ENCODE measurements at regions of chr20 and their contacts with region 1.

Region 1: GRCh38 chr20:45771182-45771759 is 20.4 kb downstream of the WFDC3 start:
- DNase-seq: peak; percentile 76
- ATAC-seq: peak; percentile 73 to 82

Region 2: GRCh38 chr20:45322952-45323383 is 448.3 kb before region 1 on chr20:
- intact Hi-C with region 1: loop called (anchors 2 to 5 kb)
- DNase-seq: peak; percentile 61
- ATAC-seq: peak; percentile 77 to 81

Region 3: DNA sequence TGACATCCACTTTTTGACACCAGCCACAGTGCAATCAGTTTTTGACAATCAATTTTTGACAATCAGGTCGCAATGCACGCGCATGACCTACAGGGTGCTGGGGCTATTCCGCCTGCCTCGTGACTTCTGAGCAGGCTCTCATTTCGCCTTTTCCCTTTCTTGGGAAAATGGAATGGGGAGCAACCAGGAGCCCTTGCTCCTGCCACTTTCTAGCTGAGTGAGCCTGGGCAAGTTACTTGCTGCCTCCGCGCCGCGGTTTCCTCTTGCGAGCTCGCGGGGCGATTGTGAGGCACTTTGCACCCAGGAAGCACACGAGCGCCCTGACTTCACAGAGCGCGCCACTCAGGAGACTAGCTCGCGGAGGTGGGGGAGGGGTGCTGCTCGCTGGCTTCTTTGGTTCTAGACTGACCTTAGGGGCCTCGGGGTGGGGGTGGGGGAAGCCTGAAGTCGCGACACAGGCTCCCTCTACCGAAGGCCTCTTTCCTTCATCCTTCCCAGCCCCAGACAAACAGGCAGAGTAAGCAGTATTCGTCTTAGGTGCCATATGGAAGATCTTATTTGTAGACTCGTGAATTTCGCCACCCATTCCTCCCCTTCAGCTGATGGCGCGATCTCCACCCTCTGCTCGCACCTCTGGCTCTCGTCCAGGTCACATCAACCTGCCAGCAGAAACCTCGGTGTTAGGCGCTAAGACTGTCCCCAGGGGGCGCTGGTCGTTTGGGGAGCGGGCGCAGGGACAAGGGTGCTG is 397.7 kb before region 1 on chr20:
- intact Hi-C with region 1: loop called in 1 of 2 experiments (anchors 5 kb)
- DNase-seq: peak; percentile 91
- ATAC-seq: peak; percentile 87 to 88

Region 4: GRCh38 chr20:45450097-45450818 is 321.0 kb before region 1 on chr20:
- intact Hi-C with region 1: loop called in 1 of 2 experiments (anchors 10 kb)
- DNase-seq: no peak
- ATAC-seq: peak in 1 of 2 donors; percentile 36

Region 5: DNA sequence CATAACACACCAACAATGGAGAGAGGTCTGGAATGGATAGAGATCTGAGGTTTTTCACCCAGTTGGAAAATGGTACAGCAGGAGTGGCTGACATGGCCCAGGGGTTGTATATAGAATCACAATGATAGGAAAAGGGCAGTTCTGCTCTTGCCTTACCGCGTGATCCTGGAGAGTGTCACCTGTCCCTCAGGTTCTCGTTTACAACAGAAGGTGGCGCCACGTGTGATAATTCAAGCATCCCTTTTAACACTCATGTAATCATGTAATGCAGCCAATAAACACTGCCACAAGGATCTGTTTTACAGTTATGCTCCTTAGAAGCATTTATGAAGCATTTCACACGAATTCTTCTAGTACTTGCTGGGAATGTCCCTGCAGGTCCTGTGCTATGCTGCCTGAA is 314.6 kb before region 1 on chr20:
- intact Hi-C with region 1: loop called (anchors 2 to 10 kb)
- DNase-seq: no peak
- ATAC-seq: no peak

Region 6: DNA sequence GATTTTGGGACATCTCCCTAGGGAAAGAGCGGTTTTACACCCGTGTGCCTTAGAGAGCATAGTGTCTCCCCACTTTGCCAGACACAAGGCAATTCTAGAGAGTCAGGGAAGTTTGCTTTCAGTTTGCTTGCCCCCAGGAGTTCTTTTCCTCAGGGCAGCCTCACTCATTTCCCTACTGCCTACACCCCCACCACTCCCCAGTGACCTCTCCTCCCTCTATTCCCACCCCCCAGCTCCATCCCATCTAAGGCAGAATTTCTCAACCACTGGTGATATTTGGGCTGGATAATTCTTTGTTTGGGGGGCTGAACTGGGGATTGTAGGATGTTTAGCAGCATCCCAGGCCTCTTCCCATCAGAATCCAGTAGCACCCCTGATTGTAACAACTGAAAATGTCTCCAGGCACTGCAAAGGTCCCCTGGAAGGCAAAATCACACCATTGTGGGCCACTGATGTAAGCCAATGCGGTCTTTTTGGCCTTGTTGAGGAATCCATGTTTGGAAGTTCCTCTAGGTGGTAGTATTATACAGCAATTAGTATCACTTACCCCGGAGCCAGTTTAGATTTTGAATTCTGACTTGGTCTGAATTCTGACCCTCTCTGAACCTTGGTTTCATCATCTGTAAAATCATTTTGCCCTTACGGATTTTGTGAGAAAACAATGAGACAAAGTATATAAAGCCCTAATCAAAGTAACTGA is 225.4 kb before region 1 on chr20:
- intact Hi-C with region 1: loop called in 1 of 2 experiments (anchors 5 kb)
- DNase-seq: no peak
- ATAC-seq: peak in 1 of 2 donors; percentile 63

Region 7: GRCh38 chr20:45735552-45735951 is 35.7 kb before region 1 on chr20:
- intact Hi-C with region 1: no loop called
- DNase-seq: no peak
- ATAC-seq: no peak

Region 8: GRCh38 chr20:45880988-45881788 is 109.9 kb after region 1 on chr20 and contains the start of gene ZSWIM1:
- intact Hi-C with region 1: no loop called
- DNase-seq: peak; percentile 99
- ATAC-seq: peak; percentile 96 to 99
- total RNA-seq, gene ZSWIM1: 10.7 to 11.5 TPM